Breast epithelium (tissue), 4 donors: ENCODE measurements at regions of chr11 and their contacts with region 1.

Region 1: GRCh38 chr11:14081581-14082231 is 119.2 kb downstream of the SPON1 start:
- DNase-seq: no peak
- H3K4me3 ChIP-seq: no peak overlapping the region
- H3K27ac ChIP-seq: peak overlapping the region; percentile 40 to 81
- H3K4me1 ChIP-seq: no peaks in the 10 kb centered on the region
- H3K27me3 ChIP-seq: no peaks in the 10 kb centered on the region
- CTCF ChIP-seq: no peak
- POLR2A ChIP-seq: no peak

Region 2: DNA sequence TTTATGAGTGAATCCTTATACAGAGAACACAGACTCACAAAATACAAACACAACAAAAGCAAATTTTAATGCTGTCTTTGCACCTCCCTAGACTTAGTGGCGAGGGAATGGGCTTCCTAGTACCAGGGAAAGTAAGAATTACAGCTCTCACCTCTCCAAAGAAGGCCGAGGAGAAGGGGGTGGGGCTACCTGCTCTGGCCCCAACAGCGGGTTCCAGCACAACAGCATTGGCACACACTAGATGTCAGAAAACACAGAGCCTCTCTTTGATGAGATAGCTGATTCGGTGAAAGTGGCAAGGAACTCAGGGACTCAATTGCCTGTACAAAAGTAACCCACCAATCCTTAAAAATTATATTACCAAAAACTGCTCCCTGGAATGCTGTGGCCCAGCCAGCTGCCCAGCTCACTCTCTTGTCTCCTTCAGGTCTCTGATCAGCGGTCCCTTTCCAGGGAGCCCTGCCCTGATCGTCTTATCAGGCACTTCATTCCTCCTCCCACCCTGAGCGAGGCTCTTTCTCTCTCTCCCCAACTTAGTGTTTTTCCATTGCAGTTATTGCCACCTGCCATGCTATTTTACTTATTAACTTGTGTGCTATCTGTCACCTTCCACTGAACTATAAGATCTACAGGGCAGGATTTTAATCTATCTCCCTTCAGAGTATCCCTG is 88.5 kb before region 1 on chr11:
- intact Hi-C with region 1: no loop called
- DNase-seq: no peak
- H3K4me3 ChIP-seq: no peak overlapping the region
- H3K27ac ChIP-seq: no peak overlapping the region
- H3K4me1 ChIP-seq: no peaks in the 10 kb centered on the region
- H3K27me3 ChIP-seq: no peaks in the 10 kb centered on the region
- CTCF ChIP-seq: no peak
- POLR2A ChIP-seq: no peak

Region 3: GRCh38 chr11:14018441-14018840 is 63.3 kb before region 1 on chr11:
- intact Hi-C with region 1: loop called (anchors 2 kb)
- DNase-seq: no peak
- H3K4me3 ChIP-seq: no peak overlapping the region
- H3K27ac ChIP-seq: no peak overlapping the region
- H3K4me1 ChIP-seq: no peaks in the 10 kb centered on the region
- H3K27me3 ChIP-seq: no peaks in the 10 kb centered on the region
- CTCF ChIP-seq: no peak
- POLR2A ChIP-seq: no peak